Activated CD8-positive, alpha-beta memory T cell treated with anti-CD3 and anti-CD28 coated beads, Interleukin-2, amount 10 ng/mL, durations not matched to agents 7 days and 5 days (primary cell): ENCODE measurements at regions of chr7 and their contacts with region 1.

Region 1: GRCh38 chr7:44097064-44097932 is 6.8 kb upstream of the AEBP1 start:
- DNase-seq: peak; percentile 60
- ATAC-seq: peak; percentile 86
- H3K4me3 Mint-ChIP-seq: peak overlapping the region; percentile 3
- H3K27ac Mint-ChIP-seq: peak overlapping the region; percentile 78
- H3K4me1 Mint-ChIP-seq: peaks cover 24% of the 10 kb centered on the region
- H3K27me3 Mint-ChIP-seq: peaks cover 2% of the 10 kb centered on the region

Region 2: DNA sequence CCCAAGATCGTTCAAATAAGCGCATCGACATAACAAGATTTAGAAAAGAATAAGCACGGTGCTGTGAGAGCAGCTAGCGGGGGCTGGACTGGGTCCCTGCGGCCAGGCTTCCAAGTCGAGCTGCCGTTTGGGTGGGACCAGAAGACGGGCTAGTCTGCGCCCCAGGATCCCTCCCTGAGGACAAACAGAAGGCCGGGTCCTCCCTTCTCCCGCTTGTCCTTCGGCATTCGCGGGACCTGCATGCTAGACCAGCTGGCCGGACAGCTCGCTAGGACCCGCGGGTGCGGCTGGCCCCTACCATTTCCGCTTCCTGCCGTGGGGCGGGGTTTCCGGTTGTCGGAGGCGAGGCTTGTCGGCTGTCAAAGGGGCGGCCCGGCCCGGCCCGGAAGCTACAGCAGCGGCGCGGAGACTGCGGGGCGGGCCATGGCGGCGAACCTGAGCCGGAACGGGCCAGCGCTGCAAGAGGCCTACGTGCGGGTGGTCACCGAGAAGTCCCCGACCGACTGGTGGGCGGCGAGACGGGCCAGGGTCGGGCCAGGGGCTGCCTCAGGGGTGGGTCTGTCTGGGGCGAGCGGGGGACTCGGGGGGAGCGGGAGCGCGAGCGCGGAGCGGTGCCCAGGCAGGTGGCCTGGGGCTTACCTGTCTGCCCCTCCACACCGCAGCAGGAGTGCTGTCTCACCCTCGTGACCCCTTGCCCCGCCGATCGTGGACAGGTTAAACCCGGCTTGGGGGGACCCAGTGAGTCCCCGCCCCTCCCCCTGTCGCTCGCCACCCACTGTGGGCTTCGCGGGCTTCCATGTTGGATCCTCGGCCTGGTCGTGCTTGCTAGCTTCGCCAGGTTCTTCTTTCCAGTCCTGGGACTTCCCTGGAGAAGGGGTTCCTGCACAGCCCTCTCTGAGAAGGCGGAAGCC is 52.7 kb before region 1 on chr7 and contains the start of gene DBNL:
- CTCF ChIA-PET with region 1: no interaction called
- DNase-seq: peak; percentile 96
- ATAC-seq: peak; percentile 78
- H3K4me3 Mint-ChIP-seq: peak within 1 kb of the TSS; percentile 92
- H3K27ac Mint-ChIP-seq: peak within 1 kb of the TSS; percentile 87
- H3K4me1 Mint-ChIP-seq: peaks cover 45% of the 10 kb centered on the region
- H3K27me3 Mint-ChIP-seq: no peaks in the 10 kb centered on the region
- total RNA-seq, gene DBNL: 148 to 153 TPM

Region 3: GRCh38 chr7:44085554-44085953 is 11.7 kb before region 1 on chr7:
- CTCF ChIA-PET with region 1: interaction called, 14 read pairs
- DNase-seq: no peak
- ATAC-seq: no peak
- H3K4me3 Mint-ChIP-seq: no peak overlapping the region
- H3K27ac Mint-ChIP-seq: no peak overlapping the region
- H3K4me1 Mint-ChIP-seq: peaks cover 19% of the 10 kb centered on the region
- H3K27me3 Mint-ChIP-seq: no peaks in the 10 kb centered on the region

Region 4: DNA sequence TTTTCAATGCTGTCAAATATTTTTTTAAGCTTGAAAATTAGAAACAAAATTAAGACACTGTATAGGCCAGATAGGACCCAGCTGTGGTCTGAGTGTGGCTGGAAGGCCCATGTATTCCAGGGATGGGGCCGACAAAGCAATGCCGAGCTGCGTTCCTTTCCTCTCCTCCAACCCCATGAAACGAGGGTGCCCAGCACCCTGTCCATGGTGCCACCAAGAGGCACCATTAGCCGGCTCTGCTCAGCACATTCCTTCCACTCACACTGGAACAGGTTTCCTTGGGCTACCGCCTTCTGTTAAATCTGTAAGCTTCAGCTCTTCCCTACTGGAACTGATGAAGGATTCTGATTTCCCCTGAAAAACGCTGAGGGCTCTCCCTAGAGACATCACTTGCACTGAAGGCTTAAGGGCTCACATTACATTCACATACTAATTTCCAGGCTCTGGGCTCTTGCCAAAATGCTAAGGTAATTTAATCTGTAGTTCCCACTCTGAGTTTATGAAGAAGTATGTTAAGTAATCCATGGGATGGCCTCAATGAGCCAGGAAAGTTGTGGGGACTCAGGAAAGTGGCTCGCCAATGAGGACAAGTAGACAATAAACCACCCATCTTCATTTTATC is 301.8 kb after region 1 on chr7:
- CTCF ChIA-PET with region 1: no interaction called
- DNase-seq: peak; percentile 32
- ATAC-seq: no peak
- H3K4me3 Mint-ChIP-seq: no peak overlapping the region
- H3K27ac Mint-ChIP-seq: no peak overlapping the region
- H3K4me1 Mint-ChIP-seq: no peaks in the 10 kb centered on the region
- H3K27me3 Mint-ChIP-seq: no peaks in the 10 kb centered on the region

Region 5: DNA sequence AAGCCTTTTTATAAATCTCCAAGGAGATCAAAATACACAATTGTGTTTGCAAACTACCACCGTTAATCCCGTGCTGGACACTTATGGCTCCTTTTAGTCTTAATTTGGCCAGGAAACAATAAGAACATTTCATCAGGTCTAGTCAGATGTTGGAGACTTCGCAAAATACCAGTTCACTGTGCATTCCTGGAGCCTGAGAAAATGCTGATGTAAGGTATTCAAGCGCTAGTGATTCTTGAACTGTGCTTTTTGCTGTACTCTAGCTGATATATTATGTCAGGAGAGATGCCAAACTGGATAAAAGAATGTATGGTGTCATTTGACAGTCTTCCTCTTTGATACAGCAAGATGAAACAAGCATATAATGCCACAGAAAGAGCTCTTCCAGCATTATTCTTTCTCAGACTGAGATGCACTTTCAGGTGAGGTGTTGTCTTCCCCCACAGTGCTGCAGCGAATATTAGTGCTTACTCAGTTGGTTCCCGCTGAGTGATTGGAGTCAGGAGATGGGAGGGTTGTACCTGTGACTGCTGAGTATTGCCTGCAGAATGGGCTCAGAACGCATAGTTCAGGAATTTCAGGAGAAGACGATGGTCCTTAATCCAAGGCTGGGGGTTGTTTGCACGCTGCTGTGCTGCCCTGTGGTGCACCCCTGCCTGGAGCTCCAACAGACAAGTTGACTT is 568.4 kb after region 1 on chr7:
- CTCF ChIA-PET with region 1: no interaction called
- DNase-seq: no peak
- ATAC-seq: no peak
- H3K4me3 Mint-ChIP-seq: no peak overlapping the region
- H3K27ac Mint-ChIP-seq: no peak overlapping the region
- H3K4me1 Mint-ChIP-seq: peaks cover 2% of the 10 kb centered on the region
- H3K27me3 Mint-ChIP-seq: no peaks in the 10 kb centered on the region